Activated B cell treated with CpG ODN at 0.5 μM for 24 hours (primary cell): ENCODE measurements at regions of chr18 and their contacts with region 1.

Region 1: DNA sequence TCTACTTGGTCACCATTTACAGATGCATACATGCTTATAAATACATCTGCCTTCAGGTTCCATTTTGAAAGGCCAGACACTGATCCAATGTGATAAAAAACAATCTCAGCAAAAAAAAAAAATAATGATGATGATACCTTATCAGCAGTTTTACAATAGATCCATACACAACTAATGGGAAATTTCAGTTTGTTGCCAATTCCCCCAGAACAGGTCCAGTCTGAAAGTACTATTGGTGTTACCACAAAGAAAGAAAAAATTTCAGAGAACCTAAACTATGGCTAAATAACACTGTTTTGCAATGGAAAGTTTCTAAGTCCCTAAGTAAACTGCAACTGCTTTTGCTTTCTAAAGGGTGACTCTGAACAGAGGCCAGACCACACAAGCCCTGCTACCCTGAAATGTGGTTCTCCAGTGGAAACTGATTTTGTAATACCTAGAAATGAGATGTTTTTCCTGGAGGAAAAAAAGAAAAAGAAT is 54.1 kb downstream of the LPIN2 start:
- DNase-seq: no peak
- ATAC-seq: no peak
- H3K4me3 Mint-ChIP-seq: peak overlapping the region; percentile 32
- H3K27ac Mint-ChIP-seq: peak overlapping the region; percentile 97
- H3K4me1 Mint-ChIP-seq: peaks cover 82% of the 10 kb centered on the region
- H3K27me3 Mint-ChIP-seq: no peaks in the 10 kb centered on the region
- CTCF ChIP-seq: no peak

Region 2: DNA sequence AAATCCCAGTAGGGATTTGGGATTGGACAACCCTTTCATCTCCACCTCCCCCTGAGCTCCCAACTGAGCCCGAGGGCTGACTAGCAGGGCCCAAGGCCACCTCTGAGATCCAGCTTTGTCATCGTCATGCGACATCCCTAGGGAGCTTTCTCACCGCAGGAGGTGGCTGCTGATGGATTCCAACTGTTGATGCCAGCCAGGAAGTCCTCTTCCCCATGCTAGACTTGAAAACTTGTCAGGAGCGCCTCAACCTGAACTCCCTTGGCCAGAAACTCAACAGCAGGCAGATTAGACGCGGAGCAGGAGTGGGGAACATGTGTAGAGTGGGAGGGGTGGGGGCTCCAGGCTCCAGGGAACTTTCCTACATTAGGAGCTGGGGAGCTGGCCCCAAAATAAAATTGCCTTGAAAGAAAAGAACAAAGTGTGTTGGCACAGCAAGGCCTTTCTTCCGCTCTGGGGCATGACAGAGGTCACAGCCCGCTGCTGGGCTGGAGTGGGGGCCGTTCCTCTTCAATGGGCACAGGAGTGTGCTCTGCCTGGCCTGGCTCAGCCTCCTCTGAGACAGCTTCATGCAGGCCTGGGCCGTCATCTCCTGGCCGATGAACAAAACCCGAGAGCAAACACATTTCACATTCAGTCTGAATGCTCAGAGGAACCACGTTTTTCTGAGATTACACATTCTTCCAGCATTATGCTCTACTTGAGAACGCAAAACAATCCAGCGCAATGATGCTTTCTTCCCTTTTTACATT is 77.6 kb before region 1 on chr18:
- CTCF ChIA-PET with region 1: no interaction called
- POLR2A ChIA-PET with region 1: no interaction called
- intact Hi-C with region 1: no loop called
- DNase-seq: no peak
- ATAC-seq: no peak
- H3K4me3 Mint-ChIP-seq: no peak overlapping the region
- H3K27ac Mint-ChIP-seq: no peak overlapping the region
- H3K4me1 Mint-ChIP-seq: peaks cover 18% of the 10 kb centered on the region
- H3K27me3 Mint-ChIP-seq: no peaks in the 10 kb centered on the region
- CTCF ChIP-seq: no peak

Region 3: GRCh38 chr18:2971741-2972552 is 13.1 kb after region 1 on chr18:
- CTCF ChIA-PET with region 1: interaction called, 9 read pairs
- POLR2A ChIA-PET with region 1: interaction called, 294 read pairs
- intact Hi-C with region 1: loop called (anchors 1 kb)
- DNase-seq: peak; percentile 53
- ATAC-seq: peak; percentile 80
- H3K4me3 Mint-ChIP-seq: peak overlapping the region; percentile 79
- H3K27ac Mint-ChIP-seq: peak overlapping the region; percentile 94
- H3K4me1 Mint-ChIP-seq: peaks cover 82% of the 10 kb centered on the region
- H3K27me3 Mint-ChIP-seq: no peaks in the 10 kb centered on the region
- CTCF ChIP-seq: no peak

Region 4: GRCh38 chr18:2978646-2979045 is 19.8 kb after region 1 on chr18:
- CTCF ChIA-PET with region 1: interaction called, 7 read pairs
- POLR2A ChIA-PET with region 1: interaction called, 294 read pairs
- intact Hi-C with region 1: no loop called
- DNase-seq: no peak
- ATAC-seq: peak; percentile 26
- H3K4me3 Mint-ChIP-seq: peak overlapping the region; percentile 52
- H3K27ac Mint-ChIP-seq: peak overlapping the region; percentile 94
- H3K4me1 Mint-ChIP-seq: peaks cover 77% of the 10 kb centered on the region
- H3K27me3 Mint-ChIP-seq: no peaks in the 10 kb centered on the region
- CTCF ChIP-seq: no peak